ENCODE measurements at regions of chr6 and their contacts with region 1.

Region 1: GRCh38 chr6:154386848-154387717 is 30.5 kb upstream of the IPCEF1 start:
- DNase-seq: peak in 1 of 2 experiments; percentile 34
- H3K4me3 ChIP-seq: no peak overlapping the region
- H3K4me3 Mint-ChIP-seq: peak overlapping the region; percentile 18
- H3K27ac Mint-ChIP-seq: peak overlapping the region; percentile 89
- H3K4me1 ChIP-seq: peaks cover 53% of the 10 kb centered on the region
- H3K4me1 Mint-ChIP-seq: peaks cover 54% of the 10 kb centered on the region
- H3K27me3 ChIP-seq: no peaks in the 10 kb centered on the region
- H3K27me3 Mint-ChIP-seq: no peaks in the 10 kb centered on the region
- CTCF ChIP-seq: no peak

Region 2: GRCh38 chr6:154432533-154433476 is 45.7 kb after region 1 on chr6:
- CTCF ChIA-PET with region 1: no interaction called
- POLR2A ChIA-PET with region 1: interaction called, 7 read pairs
- intact Hi-C with region 1: loop called (anchors 5 kb)
- DNase-seq: no peak
- H3K4me3 ChIP-seq: no peak overlapping the region
- H3K4me3 Mint-ChIP-seq: no peak overlapping the region
- H3K27ac Mint-ChIP-seq: no peak overlapping the region
- H3K4me1 ChIP-seq: peaks cover 36% of the 10 kb centered on the region
- H3K4me1 Mint-ChIP-seq: peaks cover 14% of the 10 kb centered on the region
- H3K27me3 ChIP-seq: no peaks in the 10 kb centered on the region
- H3K27me3 Mint-ChIP-seq: no peaks in the 10 kb centered on the region
- CTCF ChIP-seq: no peak

Region 3: GRCh38 chr6:154441995-154442310 is 54.9 kb after region 1 on chr6:
- CTCF ChIA-PET with region 1: no interaction called
- POLR2A ChIA-PET with region 1: no interaction called
- intact Hi-C with region 1: loop called (anchors 1 kb)
- DNase-seq: no peak
- H3K4me3 ChIP-seq: no peak overlapping the region
- H3K4me3 Mint-ChIP-seq: no peak overlapping the region
- H3K27ac Mint-ChIP-seq: peak overlapping the region; percentile 86
- H3K4me1 ChIP-seq: peaks cover 48% of the 10 kb centered on the region
- H3K4me1 Mint-ChIP-seq: peaks cover 41% of the 10 kb centered on the region
- H3K27me3 ChIP-seq: no peaks in the 10 kb centered on the region
- H3K27me3 Mint-ChIP-seq: no peaks in the 10 kb centered on the region
- CTCF ChIP-seq: no peak